OCI-LY7 (cell line): ENCODE measurements at regions of chr6 and their contacts with region 1.

Region 1: GRCh38 chr6:5723841-5724691 is 282.7 kb downstream of the NRN1 start:
- DNase-seq: peak; percentile 86
- H3K4me3 ChIP-seq: peak overlapping the region; percentile 67
- H3K27ac ChIP-seq: peak overlapping the region; percentile 23
- H3K4me1 ChIP-seq: peaks cover 52% of the 10 kb centered on the region
- CTCF ChIP-seq: no peak

Region 2: DNA sequence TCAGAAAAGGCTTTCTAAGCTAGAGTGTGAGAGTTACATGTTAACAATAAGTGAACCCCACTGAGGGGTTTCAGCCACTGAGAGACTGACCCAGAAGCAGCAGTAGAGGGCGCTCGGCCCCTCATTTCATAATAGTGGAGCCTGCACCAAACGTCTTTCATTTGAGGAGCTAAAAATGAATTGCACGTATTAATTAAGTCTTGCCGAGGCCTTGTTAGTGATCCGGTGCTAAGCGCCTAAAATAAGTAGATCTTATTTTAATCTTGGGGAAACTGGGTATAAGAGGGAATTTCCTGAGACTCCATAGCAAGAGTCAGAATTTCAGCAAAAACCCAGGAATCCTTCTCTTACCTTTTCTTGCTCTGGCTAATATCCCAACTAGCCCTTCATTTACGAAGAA is 253.0 kb before region 1 on chr6:
- CTCF ChIA-PET with region 1: no interaction called
- POLR2A ChIA-PET with region 1: no interaction called
- intact Hi-C with region 1: loop called (anchors 5 kb)
- DNase-seq: peak; percentile 67
- H3K4me3 ChIP-seq: no peak overlapping the region
- H3K27ac ChIP-seq: no peak overlapping the region
- H3K4me1 ChIP-seq: peaks cover 7% of the 10 kb centered on the region
- CTCF ChIP-seq: peak; percentile 98

Region 3: GRCh38 chr6:5626727-5627426 is 97.2 kb before region 1 on chr6:
- CTCF ChIA-PET with region 1: no interaction called
- POLR2A ChIA-PET with region 1: no interaction called
- intact Hi-C with region 1: loop called (anchors 5 kb)
- DNase-seq: peak; percentile 43
- H3K4me3 ChIP-seq: peak overlapping the region; percentile 23
- H3K27ac ChIP-seq: peak overlapping the region; percentile 24
- H3K4me1 ChIP-seq: peaks cover 29% of the 10 kb centered on the region
- CTCF ChIP-seq: no peak

Region 4: GRCh38 chr6:5665173-5665572 is 58.9 kb before region 1 on chr6:
- CTCF ChIA-PET with region 1: interaction called, 10 read pairs
- POLR2A ChIA-PET with region 1: no interaction called
- intact Hi-C with region 1: no loop called
- DNase-seq: peak; percentile 81
- H3K4me3 ChIP-seq: no peak overlapping the region
- H3K27ac ChIP-seq: peak overlapping the region; percentile 19
- H3K4me1 ChIP-seq: peaks cover 20% of the 10 kb centered on the region
- CTCF ChIP-seq: no peak